Transverse colon (tissue), 4 donors: ENCODE measurements at regions of chr15 and their contacts with region 1.

Region 1: DNA sequence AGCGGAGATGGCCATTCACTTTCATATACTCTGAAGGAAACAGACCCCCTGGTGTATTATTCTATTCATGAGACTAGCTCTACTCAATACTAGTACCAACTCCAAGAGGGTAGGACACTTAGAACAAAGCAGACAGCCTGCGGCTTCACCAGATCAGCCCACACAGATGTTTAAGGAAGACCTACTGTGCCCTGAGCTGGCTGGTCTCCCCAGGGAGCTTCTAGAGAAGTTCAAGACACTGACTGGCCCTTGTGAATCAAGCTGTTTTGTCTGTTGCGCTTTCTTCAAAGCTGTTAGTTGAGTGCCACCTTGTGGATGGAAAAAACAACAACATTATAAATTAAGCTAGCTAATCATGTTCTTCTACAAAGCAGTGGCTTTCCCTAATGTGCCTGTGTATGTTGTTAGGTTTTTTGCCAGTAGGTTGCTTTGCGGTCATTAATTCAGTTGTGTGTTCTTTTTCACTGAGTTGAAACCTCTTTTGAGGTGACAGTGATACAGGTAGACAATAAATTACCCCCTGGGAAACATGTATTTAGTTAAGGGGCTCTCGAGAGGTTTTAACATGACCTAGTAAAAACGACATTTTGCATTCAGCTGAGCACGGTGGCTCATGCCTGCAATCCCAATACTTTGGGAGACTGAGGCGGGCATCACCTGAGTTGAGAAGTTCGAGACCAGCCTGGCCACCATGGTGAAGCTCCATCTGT is 64.2 kb upstream of the MYZAP start:
- DNase-seq: no peak
- H3K4me3 ChIP-seq: no peak overlapping the region
- H3K27ac ChIP-seq: no peak overlapping the region
- H3K4me1 ChIP-seq: peaks cover 0 to 18% (median 6%) of the 10 kb centered on the region in 4 donors
- H3K27me3 ChIP-seq: no peaks in the 10 kb centered on the region
- CTCF ChIP-seq: peak; percentile 54 to 81 (median 64)
- EP300 ChIP-seq: no peak
- POLR2A ChIP-seq: no peak

Region 2: DNA sequence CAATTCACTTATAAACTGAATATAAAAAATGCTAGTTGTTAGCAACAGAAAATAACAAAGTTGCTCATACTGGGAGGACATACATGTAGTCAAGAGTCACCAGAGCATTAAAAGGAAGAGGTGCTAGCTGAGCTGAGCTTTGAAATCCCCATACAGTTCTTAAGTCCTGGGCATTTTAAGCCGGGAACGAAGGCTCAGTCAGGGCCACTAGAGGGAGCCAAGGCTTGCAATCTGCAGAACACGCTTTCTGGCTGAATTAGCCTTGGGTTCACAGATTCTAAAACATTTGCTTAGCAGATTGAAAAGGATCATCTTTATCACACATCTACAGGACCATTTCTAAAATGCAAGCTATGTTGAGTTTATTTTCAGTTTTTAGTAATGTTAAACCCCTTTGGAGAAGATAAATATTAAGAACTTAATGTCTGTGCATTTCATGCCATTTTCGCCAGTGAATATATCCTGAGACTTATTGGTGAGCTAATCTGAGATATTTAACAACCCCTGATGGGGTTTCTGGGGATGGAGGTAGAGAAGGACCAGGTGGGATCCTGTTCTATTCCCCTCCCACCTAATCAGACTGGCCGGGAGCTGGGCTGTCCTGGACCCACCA is 1036.3 kb before region 1 on chr15:
- in situ Hi-C with region 1: loop called in 1 of 4 experiments (anchors 25 kb)
- intact Hi-C with region 1: no loop called
- DNase-seq: peak; percentile 74
- H3K4me3 ChIP-seq: no peak overlapping the region
- H3K27ac ChIP-seq: no peak overlapping the region
- H3K4me1 ChIP-seq: peaks cover 0 to 23% (median 0%) of the 10 kb centered on the region in 4 donors
- H3K27me3 ChIP-seq: no peaks in the 10 kb centered on the region
- CTCF ChIP-seq: peak; percentile 66 to 81 (median 73)
- EP300 ChIP-seq: no peak
- POLR2A ChIP-seq: no peak

Region 3: GRCh38 chr15:57158589-57158988 is 368.9 kb before region 1 on chr15:
- in situ Hi-C with region 1: loop called in 1 of 4 experiments (anchors 25 kb)
- intact Hi-C with region 1: no loop called
- DNase-seq: no peak
- H3K4me3 ChIP-seq: no peak overlapping the region
- H3K27ac ChIP-seq: no peak overlapping the region
- H3K4me1 ChIP-seq: peaks cover 0 to 11% (median 0%) of the 10 kb centered on the region in 4 donors
- H3K27me3 ChIP-seq: no peaks in the 10 kb centered on the region
- CTCF ChIP-seq: no peak
- EP300 ChIP-seq: no peak
- POLR2A ChIP-seq: no peak

Region 4: DNA sequence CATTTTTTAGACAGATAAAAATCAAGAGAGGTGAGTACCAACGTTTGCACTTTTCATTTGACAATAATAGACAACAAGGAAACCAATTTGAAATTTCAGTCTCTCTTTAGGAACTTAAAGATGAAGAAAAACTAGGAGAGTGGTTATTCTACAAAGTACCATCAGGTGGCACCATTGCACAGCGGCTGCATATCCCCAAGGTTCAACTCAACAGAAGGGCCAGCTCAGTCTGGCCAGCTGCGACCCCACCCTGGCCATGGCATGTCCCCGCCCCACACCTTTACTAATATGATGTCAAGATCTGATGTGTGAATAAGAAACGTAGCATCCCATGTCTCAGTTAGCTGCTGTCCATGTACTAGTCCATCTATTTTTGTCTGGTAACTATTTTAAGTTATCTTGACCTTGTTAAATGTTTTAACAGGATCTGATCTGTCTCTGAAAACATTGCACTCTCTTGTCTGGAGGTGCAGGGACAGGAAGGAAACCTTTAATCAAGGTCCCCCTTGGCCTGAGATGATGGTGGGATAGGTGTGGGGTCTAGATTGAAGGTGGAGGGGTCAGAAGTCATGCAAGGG is 186.8 kb before region 1 on chr15:
- in situ Hi-C with region 1: loop called (anchors 5 kb)
- intact Hi-C with region 1: loop called (anchors 1 kb)
- DNase-seq: peak; percentile 51
- H3K4me3 ChIP-seq: no peak overlapping the region
- H3K27ac ChIP-seq: no peak overlapping the region
- H3K4me1 ChIP-seq: no peaks in the 10 kb centered on the region
- H3K27me3 ChIP-seq: no peaks in the 10 kb centered on the region
- CTCF ChIP-seq: peak; percentile 88 to 90 (median 89)
- EP300 ChIP-seq: no peak
- POLR2A ChIP-seq: no peak